SK-N-SH (cell line): ENCODE measurements at regions of chr4 and their contacts with region 1.

Region 1: DNA sequence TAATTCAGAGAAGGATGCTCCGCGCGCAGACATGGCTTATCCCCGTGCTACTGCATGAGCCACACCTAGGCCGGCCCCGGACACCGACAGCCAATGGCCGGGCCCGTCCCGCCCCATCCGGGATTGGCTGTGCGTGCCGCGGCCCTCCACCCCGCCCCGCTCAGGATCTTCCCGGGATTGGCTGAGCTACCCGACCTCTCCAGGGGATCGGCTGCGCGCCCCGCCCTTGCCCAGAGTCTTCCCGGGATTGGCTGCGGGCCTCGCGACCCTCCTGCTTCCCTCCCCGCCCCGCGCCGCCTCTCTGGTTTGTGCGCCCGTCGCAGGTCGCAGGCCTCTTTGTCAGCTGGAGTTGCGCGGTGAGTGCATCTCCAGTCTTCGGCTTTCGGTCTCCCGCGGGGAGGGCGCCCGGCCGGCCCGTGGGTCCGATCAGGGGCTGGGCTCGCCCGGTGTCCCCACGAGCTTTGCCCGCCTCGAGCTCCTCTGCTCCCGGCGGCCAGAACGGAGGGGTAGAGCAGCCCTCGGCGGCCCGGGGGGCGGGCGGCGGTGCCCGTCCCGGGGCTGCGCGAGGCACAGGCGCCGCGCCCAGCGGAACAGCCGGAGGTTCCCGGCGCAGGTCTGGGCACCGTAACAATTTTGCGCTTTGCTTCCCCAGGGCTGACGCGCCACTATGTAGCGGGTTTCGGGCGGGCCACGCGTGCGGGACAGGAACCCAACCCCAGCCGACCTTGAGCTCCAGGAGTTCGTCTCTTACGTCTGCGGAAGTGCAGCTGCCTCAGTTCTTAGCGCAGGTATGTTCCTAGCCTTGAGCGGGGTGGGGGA is 38.8 kb downstream of the ERVMER34-1 start:
- DNase-seq: peak; percentile 98
- H3K4me3 ChIP-seq: peak overlapping the region; percentile 89
- H3K27ac ChIP-seq: peak overlapping the region; percentile 34 to 85; a peak in 3 of 4 replicates
- H3K4me1 ChIP-seq: peaks cover 10 to 33% of the 10 kb centered on the region in 2 experiments; a peak in 2 of 4 replicates
- H3K27me3 ChIP-seq: no peaks in the 10 kb centered on the region
- CTCF ChIP-seq: no peak
- EP300 ChIP-seq: no peak
- RAD21 ChIP-seq: no peak

Region 2: GRCh38 chr4:52617336-52618020 is 94.9 kb before region 1 on chr4:
- CTCF ChIA-PET with region 1: no interaction called
- POLR2A ChIA-PET with region 1: no interaction called
- DNase-seq: no peak
- H3K4me3 ChIP-seq: no peak overlapping the region
- H3K27ac ChIP-seq: no peak overlapping the region
- H3K4me1 ChIP-seq: no peaks in the 10 kb centered on the region; a peak in 1 of 4 replicates
- H3K27me3 ChIP-seq: no peaks in the 10 kb centered on the region
- CTCF ChIP-seq: no peak
- EP300 ChIP-seq: no peak
- RAD21 ChIP-seq: no peak

Region 3: GRCh38 chr4:52659001-52659721 is 53.2 kb before region 1 on chr4 and contains the start of gene USP46:
- CTCF ChIA-PET with region 1: interaction called, 3 read pairs
- POLR2A ChIA-PET with region 1: interaction called, 23 read pairs
- DNase-seq: peak; percentile 97
- H3K4me3 ChIP-seq: peak within 1 kb of the TSS; percentile 88
- H3K27ac ChIP-seq: peak within 1 kb of the TSS; percentile 79 to 90
- H3K4me1 ChIP-seq: peaks cover 8 to 14% of the 10 kb centered on the region in 2 experiments; a peak in 2 of 4 replicates
- H3K27me3 ChIP-seq: no peaks in the 10 kb centered on the region
- CTCF ChIP-seq: no peak
- EP300 ChIP-seq: no peak
- RAD21 ChIP-seq: no peak
- polyA plus RNA-seq, gene USP46: 4.5 and 6.0 TPM in 2 replicates

Region 4: GRCh38 chr4:52799813-52800212 is 87.4 kb after region 1 on chr4:
- CTCF ChIA-PET with region 1: no interaction called
- POLR2A ChIA-PET with region 1: no interaction called
- DNase-seq: no peak
- H3K4me3 ChIP-seq: no peak overlapping the region
- H3K27ac ChIP-seq: no peak overlapping the region
- H3K4me1 ChIP-seq: no peaks in the 10 kb centered on the region
- H3K27me3 ChIP-seq: no peaks in the 10 kb centered on the region
- CTCF ChIP-seq: no peak
- EP300 ChIP-seq: no peak
- RAD21 ChIP-seq: no peak

Region 5: DNA sequence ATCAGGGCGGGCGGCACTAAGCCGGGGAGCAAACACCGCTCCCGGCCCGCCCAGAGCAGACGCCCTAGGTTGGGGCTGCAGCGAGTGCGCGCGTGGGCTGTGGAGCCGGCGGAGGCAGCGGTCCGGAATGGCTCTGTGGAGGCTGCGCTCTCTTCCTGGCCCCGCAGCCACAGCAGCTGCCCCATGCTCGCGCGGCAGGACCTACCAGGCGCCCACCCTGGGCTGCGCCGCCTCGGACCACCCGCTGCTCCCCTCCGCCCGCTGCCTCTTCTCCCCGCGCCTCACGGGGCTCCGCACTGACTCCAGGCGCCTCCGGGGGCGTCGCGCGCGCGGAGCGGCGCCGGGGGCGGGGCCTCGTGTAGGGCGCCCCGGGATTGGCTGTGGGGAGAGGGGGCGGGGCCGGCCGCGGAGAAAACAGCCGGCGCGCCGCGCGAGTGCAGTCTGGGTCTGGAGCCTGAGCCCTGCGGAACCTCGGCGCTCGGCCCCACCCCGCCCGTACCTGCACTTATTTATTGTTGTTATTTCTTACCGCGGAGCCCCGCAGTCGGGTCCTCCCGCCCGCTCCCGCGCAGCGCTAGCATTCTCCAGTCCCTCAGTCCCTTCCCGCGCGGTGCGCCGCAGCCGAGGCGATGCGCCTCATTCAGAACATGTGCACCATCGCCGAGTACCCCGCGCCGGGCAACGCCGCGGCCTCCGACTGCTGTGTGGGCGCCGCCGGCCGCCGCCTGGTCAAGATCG is 149.7 kb after region 1 on chr4 and contains the start of gene RASL11B:
- CTCF ChIA-PET with region 1: interaction called, 7 read pairs
- POLR2A ChIA-PET with region 1: interaction called, 28 read pairs
- DNase-seq: peak; percentile 98
- H3K4me3 ChIP-seq: peak within 1 kb of the TSS; percentile 71 to 73
- H3K27ac ChIP-seq: peak within 1 kb of the TSS in 1 of 2 experiments; percentile 100; a peak in 2 of 4 replicates
- H3K4me1 ChIP-seq: peaks cover 0 to 31% of the 10 kb centered on the region in 2 experiments; a peak in 2 of 4 replicates
- H3K27me3 ChIP-seq: no peaks in the 10 kb centered on the region; the same call in 1 of the 2 replicates
- CTCF ChIP-seq: peak; percentile 15; the same call in 1 of the 2 replicates
- EP300 ChIP-seq: no peak
- RAD21 ChIP-seq: no peak; the same call in none of the 2 replicates
- polyA plus RNA-seq, gene RASL11B: 0.54 and 1.2 TPM in 2 replicates

Region 6: DNA sequence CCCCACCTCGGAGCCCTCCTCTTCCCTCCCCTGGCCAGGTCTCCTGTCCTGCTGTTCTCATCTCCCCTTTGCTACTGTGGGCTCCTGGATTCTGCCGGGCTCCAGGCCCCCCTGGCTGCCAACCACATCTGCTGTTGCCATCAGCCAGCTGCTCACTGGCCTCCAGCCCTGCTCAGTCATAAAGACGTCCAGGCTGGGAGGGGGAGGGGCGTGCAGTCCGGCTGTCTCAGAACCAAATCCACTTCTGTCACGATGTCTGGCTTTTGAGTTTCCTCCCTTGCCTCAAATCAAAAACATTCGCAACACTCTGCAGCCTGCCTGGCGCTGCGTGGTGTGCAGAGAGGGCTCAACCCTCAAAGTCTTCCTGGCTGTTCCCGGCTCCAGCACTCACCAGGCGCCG is 156.8 kb after region 1 on chr4:
- CTCF ChIA-PET with region 1: interaction called, 7 read pairs
- POLR2A ChIA-PET with region 1: interaction called, 28 read pairs
- DNase-seq: peak; percentile 88
- H3K4me3 ChIP-seq: no peak overlapping the region
- H3K27ac ChIP-seq: peak overlapping the region; percentile 25 to 100; a peak in 3 of 4 replicates
- H3K4me1 ChIP-seq: peaks cover 0 to 76% of the 10 kb centered on the region in 2 experiments; a peak in 3 of 4 replicates
- H3K27me3 ChIP-seq: no peaks in the 10 kb centered on the region
- CTCF ChIP-seq: no peak
- EP300 ChIP-seq: peak in 1 of 2 experiments; percentile 94; a peak in 2 of 4 replicates
- RAD21 ChIP-seq: peak; percentile 40; the same call in 1 of the 2 replicates